IMR-90 (cell line): ENCODE measurements at regions of chr17 and their contacts with region 1.

Region 1: GRCh38 chr17:67072885-67073284 is 28.5 kb downstream of the CACNG1 start:
- DNase-seq: no peak
- ATAC-seq: no peak
- H3K4me3 ChIP-seq: no peak overlapping the region
- H3K27ac ChIP-seq: no peak overlapping the region
- H3K4me1 ChIP-seq: no peaks in the 10 kb centered on the region
- H3K27me3 ChIP-seq: no peaks in the 10 kb centered on the region
- CTCF ChIP-seq: no peak
- POLR2A ChIP-seq: no peak
- RAD21 ChIP-seq: no peak

Region 2: DNA sequence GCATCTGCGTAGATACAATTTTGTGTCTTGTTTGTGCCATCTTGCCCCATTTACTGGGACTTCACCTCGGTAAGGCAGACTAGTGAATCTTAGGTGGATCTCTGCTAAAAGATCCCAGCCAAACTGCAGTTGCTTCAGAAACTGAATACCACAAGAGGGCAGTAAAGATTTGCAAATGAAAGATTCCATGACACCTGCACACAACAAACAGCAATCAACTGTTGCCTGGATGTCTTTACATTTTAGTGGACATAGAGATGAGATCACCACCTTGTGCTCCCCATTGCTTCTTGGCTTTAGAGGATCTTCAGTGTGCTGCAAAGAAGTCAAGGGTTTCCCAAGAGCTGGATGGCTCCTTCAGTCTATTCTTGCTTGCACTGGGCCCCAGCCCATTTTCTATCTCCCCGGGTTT is 357.1 kb before region 1 on chr17:
- CTCF ChIA-PET with region 1: no interaction called
- POLR2A ChIA-PET with region 1: no interaction called
- dilution Hi-C with region 1: no loop called
- in situ Hi-C with region 1: no loop called
- intact Hi-C with region 1: no loop called
- DNase-seq: peak; percentile 75
- ATAC-seq: peak; percentile 71
- H3K4me3 ChIP-seq: no peak overlapping the region
- H3K27ac ChIP-seq: no peak overlapping the region
- H3K4me1 ChIP-seq: no peaks in the 10 kb centered on the region
- H3K27me3 ChIP-seq: no peaks in the 10 kb centered on the region
- CTCF ChIP-seq: peak; percentile 67
- POLR2A ChIP-seq: no peak
- RAD21 ChIP-seq: peak; percentile 69

Region 3: DNA sequence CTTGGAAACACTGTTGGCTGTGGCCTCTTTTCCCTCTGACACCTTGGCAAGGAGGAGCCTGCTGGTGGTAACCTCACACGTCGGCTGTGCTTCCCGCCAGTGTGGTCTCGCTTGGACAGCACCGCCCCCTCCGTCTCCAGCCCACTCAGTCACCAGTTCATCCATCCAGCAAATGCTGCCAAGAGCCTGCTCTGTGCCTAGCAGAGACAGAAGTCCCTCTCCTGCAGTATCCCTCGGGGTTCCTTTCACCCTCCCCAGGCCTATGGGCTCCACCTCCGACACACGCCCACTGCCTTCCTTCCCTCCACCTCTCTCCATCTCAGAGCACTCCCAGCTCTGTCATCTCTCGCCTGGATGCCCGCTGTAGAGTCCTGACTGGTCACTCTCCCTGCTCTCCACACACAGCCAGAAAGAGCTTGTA is 96.1 kb before region 1 on chr17:
- CTCF ChIA-PET with region 1: no interaction called
- POLR2A ChIA-PET with region 1: no interaction called
- dilution Hi-C with region 1: no loop called
- in situ Hi-C with region 1: no loop called
- intact Hi-C with region 1: no loop called
- DNase-seq: no peak
- ATAC-seq: peak; percentile 70
- H3K4me3 ChIP-seq: no peak overlapping the region
- H3K27ac ChIP-seq: no peak overlapping the region
- H3K4me1 ChIP-seq: peaks cover 6% of the 10 kb centered on the region; the same call in 1 of the 2 replicates
- H3K27me3 ChIP-seq: peaks cover 60% of the 10 kb centered on the region
- CTCF ChIP-seq: no peak
- POLR2A ChIP-seq: no peak
- RAD21 ChIP-seq: no peak

Region 4: DNA sequence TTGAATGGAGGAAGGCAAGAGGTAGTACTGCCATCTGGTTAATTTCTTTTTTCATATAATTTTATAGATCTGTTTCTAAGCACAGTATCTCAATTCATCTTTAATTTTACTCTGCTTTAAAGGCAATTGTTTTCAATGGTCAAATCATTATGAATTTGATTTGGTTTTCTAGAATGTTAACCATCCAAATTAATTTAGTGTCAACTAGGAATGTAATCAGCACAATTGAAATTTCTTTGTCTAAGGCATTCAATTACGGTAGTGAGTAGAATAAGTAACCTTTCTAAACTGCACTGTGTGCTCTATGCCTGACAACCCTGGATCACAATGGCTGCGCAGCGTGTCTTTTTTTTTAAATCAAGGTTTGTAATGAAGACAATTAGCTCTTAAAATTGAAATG is 15.8 kb after region 1 on chr17:
- CTCF ChIA-PET with region 1: no interaction called
- POLR2A ChIA-PET with region 1: no interaction called
- dilution Hi-C with region 1: no loop called
- in situ Hi-C with region 1: no loop called
- intact Hi-C with region 1: loop called (anchors 2 kb)
- DNase-seq: no peak
- ATAC-seq: no peak
- H3K4me3 ChIP-seq: no peak overlapping the region
- H3K27ac ChIP-seq: no peak overlapping the region
- H3K4me1 ChIP-seq: no peaks in the 10 kb centered on the region
- H3K27me3 ChIP-seq: no peaks in the 10 kb centered on the region
- CTCF ChIP-seq: no peak
- POLR2A ChIP-seq: no peak
- RAD21 ChIP-seq: no peak